Activated CD4-positive, alpha-beta memory T cell treated with anti-CD3 and anti-CD28 coated beads, Interleukin-2, amount 10 ng/mL, durations not matched to agents 7 days and 5 days (primary cell): ENCODE measurements at regions of chr12 and their contacts with region 1.

Region 1: GRCh38 chr12:14365294-14366208 is at the start of gene ATF7IP:
- DNase-seq: peak; percentile 96
- H3K4me3 Mint-ChIP-seq: peak within 1 kb of the TSS; percentile 79
- H3K27ac Mint-ChIP-seq: peak within 1 kb of the TSS; percentile 94
- H3K4me1 Mint-ChIP-seq: peaks cover 31% of the 10 kb centered on the region
- H3K27me3 Mint-ChIP-seq: no peaks in the 10 kb centered on the region
- total RNA-seq, gene ATF7IP: 129 to 134 TPM

Region 2: GRCh38 chr12:14239350-14239934 is 126.1 kb before region 1 on chr12:
- CTCF ChIA-PET with region 1: interaction called, 24 read pairs
- POLR2A ChIA-PET with region 1: interaction called, 33 read pairs
- DNase-seq: peak; percentile 51
- H3K4me3 Mint-ChIP-seq: peak overlapping the region; percentile 62
- H3K27ac Mint-ChIP-seq: peak overlapping the region; percentile 75
- H3K4me1 Mint-ChIP-seq: peaks cover 25% of the 10 kb centered on the region
- H3K27me3 Mint-ChIP-seq: no peaks in the 10 kb centered on the region

Region 3: DNA sequence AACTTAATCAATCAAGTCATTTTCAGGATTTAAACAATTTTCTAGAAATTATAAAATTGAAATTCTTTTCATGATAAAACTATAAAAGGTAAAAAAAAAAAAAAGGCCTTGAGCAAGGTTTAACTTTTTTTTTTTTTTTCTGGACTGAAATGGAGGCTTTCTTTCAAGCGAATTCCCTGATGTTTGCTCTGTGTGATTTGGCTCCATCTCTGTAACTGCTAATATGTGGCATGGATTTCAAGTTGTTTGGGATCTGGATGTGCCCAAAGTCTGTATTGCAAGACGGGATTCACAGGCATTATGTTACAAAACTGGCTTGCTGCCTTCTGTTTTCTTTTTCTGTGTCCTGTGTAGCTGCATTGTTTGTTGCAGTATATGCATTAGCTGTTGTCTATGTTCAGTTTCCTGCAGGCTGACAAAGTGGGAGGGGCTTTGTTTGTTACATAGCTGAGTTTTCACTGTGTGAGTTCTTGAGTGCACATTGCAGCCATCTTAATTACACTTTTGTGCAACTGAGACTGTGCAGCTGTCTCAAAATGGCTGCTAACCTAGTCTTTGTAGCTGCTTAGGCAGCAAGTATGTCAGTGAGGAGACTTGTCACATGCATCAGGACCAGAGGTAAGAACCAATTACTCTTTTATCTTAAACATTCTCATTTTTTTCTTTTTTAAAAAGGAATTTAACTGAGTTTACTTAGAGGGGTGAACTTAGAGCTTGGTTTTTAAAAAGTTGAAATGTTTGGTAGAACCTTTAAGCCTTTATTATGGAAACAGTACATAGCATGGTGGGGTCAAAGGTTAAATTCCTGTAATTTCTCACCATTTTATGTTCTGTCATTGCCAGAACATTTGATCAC is 19.5 kb after region 1 on chr12:
- CTCF ChIA-PET with region 1: interaction called, 95 read pairs
- POLR2A ChIA-PET with region 1: interaction called, 247 read pairs
- DNase-seq: peak; percentile 81
- H3K4me3 Mint-ChIP-seq: peak overlapping the region; percentile 74
- H3K27ac Mint-ChIP-seq: peak overlapping the region; percentile 95
- H3K4me1 Mint-ChIP-seq: peaks cover 53% of the 10 kb centered on the region
- H3K27me3 Mint-ChIP-seq: no peaks in the 10 kb centered on the region

Region 4: GRCh38 chr12:14403711-14404196 is 38.2 kb after region 1 on chr12:
- CTCF ChIA-PET with region 1: interaction called, 5 read pairs
- POLR2A ChIA-PET with region 1: interaction called, 18 read pairs
- DNase-seq: no peak
- H3K4me3 Mint-ChIP-seq: no peak overlapping the region
- H3K27ac Mint-ChIP-seq: peak overlapping the region; percentile 38
- H3K4me1 Mint-ChIP-seq: peaks cover 73% of the 10 kb centered on the region
- H3K27me3 Mint-ChIP-seq: no peaks in the 10 kb centered on the region

Region 5: GRCh38 chr12:14417715-14418114 is 52.2 kb after region 1 on chr12:
- CTCF ChIA-PET with region 1: interaction called, 21 read pairs
- POLR2A ChIA-PET with region 1: interaction called, 36 read pairs
- DNase-seq: peak; percentile 81
- H3K4me3 Mint-ChIP-seq: peak overlapping the region; percentile 73
- H3K27ac Mint-ChIP-seq: peak overlapping the region; percentile 90
- H3K4me1 Mint-ChIP-seq: peaks cover 58% of the 10 kb centered on the region
- H3K27me3 Mint-ChIP-seq: no peaks in the 10 kb centered on the region

Region 6: GRCh38 chr12:14495326-14495725 is 129.8 kb after region 1 on chr12:
- CTCF ChIA-PET with region 1: no interaction called
- POLR2A ChIA-PET with region 1: no interaction called
- DNase-seq: no peak
- H3K4me3 Mint-ChIP-seq: no peak overlapping the region
- H3K27ac Mint-ChIP-seq: no peak overlapping the region
- H3K4me1 Mint-ChIP-seq: peaks cover 9% of the 10 kb centered on the region
- H3K27me3 Mint-ChIP-seq: no peaks in the 10 kb centered on the region